ENCODE measurements at regions of chr14 and their contacts with region 1.

Region 1: GRCh38 chr14:71415404-71415690 is 508.1 kb downstream of the PCNX1 start:
- DNase-seq: no peak
- ATAC-seq: no peak
- H3K4me3 Mint-ChIP-seq: no peak overlapping the region
- H3K27ac Mint-ChIP-seq: no peak overlapping the region
- H3K4me1 Mint-ChIP-seq: peaks cover 27% of the 10 kb centered on the region
- H3K27me3 Mint-ChIP-seq: no peaks in the 10 kb centered on the region
- CTCF ChIP-seq: no peak

Region 2: DNA sequence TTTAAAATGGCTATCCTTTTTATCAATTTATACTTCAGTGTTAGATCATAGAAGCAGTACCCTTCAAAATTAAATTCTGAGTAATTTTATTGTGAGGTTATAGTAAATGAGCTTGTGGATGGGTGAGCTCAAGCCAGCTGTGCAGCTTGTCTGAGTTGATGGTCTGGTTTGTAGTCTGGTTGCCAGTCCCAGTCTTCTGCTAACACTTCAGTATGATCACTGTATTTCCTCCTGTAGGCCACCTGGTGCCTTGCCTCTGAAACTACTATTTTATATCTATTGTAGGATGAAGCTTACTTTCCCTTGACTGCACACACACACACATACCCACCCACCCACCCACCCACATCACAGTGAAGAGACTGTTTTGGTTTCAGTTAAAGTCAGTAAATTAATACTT is 11.7 kb before region 1 on chr14:
- CTCF ChIA-PET with region 1: interaction called, 11 read pairs
- POLR2A ChIA-PET with region 1: interaction called, 6 read pairs
- intact Hi-C with region 1: no loop called
- DNase-seq: peak; percentile 58
- ATAC-seq: peak; percentile 72
- H3K4me3 Mint-ChIP-seq: no peak overlapping the region
- H3K27ac Mint-ChIP-seq: no peak overlapping the region
- H3K4me1 Mint-ChIP-seq: peaks cover 35% of the 10 kb centered on the region
- H3K27me3 Mint-ChIP-seq: no peaks in the 10 kb centered on the region
- CTCF ChIP-seq: peak; percentile 39

Measured in activated CD8-positive, alpha-beta T cell treated with anti-CD3 and anti-CD28 coated beads for 36 hours (primary cell).